HCT116 (cell line): ENCODE measurements at regions of chr4 and their contacts with region 1.

Region 1: GRCh38 chr4:137735561-137736104 is 203.3 kb upstream of the PCDH18 start:
- DNase-seq: no peak
- ATAC-seq: no peak
- H3K4me3 ChIP-seq: no peak overlapping the region
- H3K27ac ChIP-seq: no peak overlapping the region
- H3K4me1 ChIP-seq: no peaks in the 10 kb centered on the region
- H3K27me3 ChIP-seq: no peaks in the 10 kb centered on the region
- CTCF ChIP-seq: no peak
- POLR2A ChIP-seq: no peak
- RAD21 ChIP-seq: no peak

Region 2: GRCh38 chr4:137861682-137862081 is 126.0 kb after region 1 on chr4:
- CTCF ChIA-PET with region 1: no interaction called
- POLR2A ChIA-PET with region 1: no interaction called
- RAD21 ChIA-PET with region 1: no interaction called
- intact Hi-C with region 1: loop called (anchors 2 kb)
- DNase-seq: no peak
- ATAC-seq: no peak
- H3K4me3 ChIP-seq: no peak overlapping the region
- H3K27ac ChIP-seq: no peak overlapping the region
- H3K4me1 ChIP-seq: no peaks in the 10 kb centered on the region
- H3K27me3 ChIP-seq: no peaks in the 10 kb centered on the region
- CTCF ChIP-seq: peak; percentile 29 to 37 (median 37); a peak in 4 of 6 replicates
- POLR2A ChIP-seq: no peak
- RAD21 ChIP-seq: peak; percentile 50

Region 3: DNA sequence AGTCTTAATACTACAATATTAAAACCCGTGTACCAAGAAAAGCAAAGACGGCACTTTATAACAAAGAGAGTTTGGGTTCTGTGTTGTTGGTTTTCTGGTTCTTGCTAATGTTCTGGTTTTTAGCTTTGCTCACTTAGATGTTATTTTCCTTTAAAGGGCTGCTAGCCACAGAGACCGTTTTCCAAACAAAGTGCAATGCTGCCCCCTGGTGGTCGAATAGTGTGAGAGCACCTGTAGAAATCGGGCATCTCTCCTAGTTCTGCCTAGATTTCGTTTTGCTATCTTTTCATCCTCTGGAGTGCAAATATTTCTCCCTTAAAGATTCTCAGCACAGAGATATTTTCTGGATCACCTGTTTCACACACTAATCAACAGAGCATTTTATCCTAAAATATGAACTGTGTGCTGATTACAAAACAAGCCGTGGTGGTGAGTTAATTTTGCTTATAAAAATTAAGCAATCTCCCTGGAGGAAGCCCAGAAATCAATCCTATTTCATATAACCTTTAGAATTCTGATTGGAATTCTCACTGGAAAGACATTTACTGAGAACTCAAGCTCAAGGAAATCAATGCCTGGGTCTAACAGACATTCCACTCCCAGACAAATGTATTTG is 945.5 kb after region 1 on chr4:
- CTCF ChIA-PET with region 1: no interaction called
- POLR2A ChIA-PET with region 1: no interaction called
- RAD21 ChIA-PET with region 1: no interaction called
- intact Hi-C with region 1: loop called (anchors 1 kb)
- DNase-seq: peak; percentile 57
- ATAC-seq: peak; percentile 84
- H3K4me3 ChIP-seq: no peak overlapping the region
- H3K27ac ChIP-seq: no peak overlapping the region
- H3K4me1 ChIP-seq: no peaks in the 10 kb centered on the region
- H3K27me3 ChIP-seq: no peaks in the 10 kb centered on the region
- CTCF ChIP-seq: peak; percentile 72 to 96 (median 74); a peak in 5 of 6 replicates
- POLR2A ChIP-seq: no peak
- RAD21 ChIP-seq: peak; percentile 91

Region 4: GRCh38 chr4:138870737-138871554 is 1135.3 kb after region 1 on chr4:
- CTCF ChIA-PET with region 1: interaction called, 4 read pairs
- POLR2A ChIA-PET with region 1: no interaction called
- RAD21 ChIA-PET with region 1: no interaction called
- intact Hi-C with region 1: loop called (anchors 2 kb)
- DNase-seq: peak; percentile 65
- ATAC-seq: peak; percentile 82
- H3K4me3 ChIP-seq: no peak overlapping the region
- H3K27ac ChIP-seq: no peak overlapping the region
- H3K4me1 ChIP-seq: peaks cover 0 to 9% of the 10 kb centered on the region in 2 experiments; a peak in 1 of 4 replicates
- H3K27me3 ChIP-seq: peaks cover 6% of the 10 kb centered on the region; the same call in 1 of the 2 replicates
- CTCF ChIP-seq: peak; percentile 71 to 87 (median 81)
- POLR2A ChIP-seq: no peak
- RAD21 ChIP-seq: peak; percentile 94